ENCODE measurements at regions of chr16 and their contacts with region 1.

Region 1: DNA sequence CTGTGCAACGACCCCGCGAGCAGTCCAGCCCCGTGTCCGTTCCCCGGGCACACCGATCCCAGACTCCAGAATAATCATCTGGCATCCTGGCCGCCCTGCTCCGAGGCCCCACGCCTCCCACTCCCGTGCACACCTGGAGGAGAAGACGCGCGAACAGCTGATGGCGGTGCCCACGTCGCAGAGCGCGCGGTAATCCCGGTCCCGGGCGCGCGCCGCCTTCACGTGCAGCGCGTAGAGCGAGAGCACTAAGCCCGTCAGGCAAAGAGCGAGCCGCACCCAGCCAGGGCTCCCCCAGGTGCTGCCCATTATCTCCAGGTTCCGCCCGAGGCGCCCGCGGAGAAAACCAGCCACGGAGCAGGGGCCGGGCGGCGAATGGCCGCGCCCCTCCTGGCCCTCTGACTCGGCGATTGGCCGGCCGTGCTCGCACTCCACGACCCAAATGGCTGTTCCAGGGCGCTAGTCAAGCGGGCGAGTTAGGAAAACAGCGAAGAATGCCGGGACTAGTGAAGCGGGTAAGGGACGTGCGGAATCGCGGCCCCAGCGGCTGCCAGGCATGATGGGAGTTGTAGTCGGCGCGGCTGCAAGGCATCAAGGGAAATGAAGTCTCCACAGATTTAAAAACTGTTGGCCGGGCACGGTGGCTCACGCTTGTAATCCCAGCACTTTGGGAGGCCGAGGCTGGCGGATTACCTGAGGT is at the start of gene VKORC1:
- DNase-seq: peak; percentile 97
- H3K4me3 ChIP-seq: peak within 1 kb of the TSS; percentile 28 to 91 (median 62)
- H3K27ac ChIP-seq: peak within 1 kb of the TSS; percentile 6
- H3K4me1 ChIP-seq: peaks cover 3% of the 10 kb centered on the region
- H3K27me3 ChIP-seq: no peaks in the 10 kb centered on the region
- CTCF ChIP-seq: no peak
- POLR2A ChIP-seq: peak; percentile 64
- total RNA-seq, gene VKORC1: 91.8 and 93.5 TPM in 2 replicates

Region 2: DNA sequence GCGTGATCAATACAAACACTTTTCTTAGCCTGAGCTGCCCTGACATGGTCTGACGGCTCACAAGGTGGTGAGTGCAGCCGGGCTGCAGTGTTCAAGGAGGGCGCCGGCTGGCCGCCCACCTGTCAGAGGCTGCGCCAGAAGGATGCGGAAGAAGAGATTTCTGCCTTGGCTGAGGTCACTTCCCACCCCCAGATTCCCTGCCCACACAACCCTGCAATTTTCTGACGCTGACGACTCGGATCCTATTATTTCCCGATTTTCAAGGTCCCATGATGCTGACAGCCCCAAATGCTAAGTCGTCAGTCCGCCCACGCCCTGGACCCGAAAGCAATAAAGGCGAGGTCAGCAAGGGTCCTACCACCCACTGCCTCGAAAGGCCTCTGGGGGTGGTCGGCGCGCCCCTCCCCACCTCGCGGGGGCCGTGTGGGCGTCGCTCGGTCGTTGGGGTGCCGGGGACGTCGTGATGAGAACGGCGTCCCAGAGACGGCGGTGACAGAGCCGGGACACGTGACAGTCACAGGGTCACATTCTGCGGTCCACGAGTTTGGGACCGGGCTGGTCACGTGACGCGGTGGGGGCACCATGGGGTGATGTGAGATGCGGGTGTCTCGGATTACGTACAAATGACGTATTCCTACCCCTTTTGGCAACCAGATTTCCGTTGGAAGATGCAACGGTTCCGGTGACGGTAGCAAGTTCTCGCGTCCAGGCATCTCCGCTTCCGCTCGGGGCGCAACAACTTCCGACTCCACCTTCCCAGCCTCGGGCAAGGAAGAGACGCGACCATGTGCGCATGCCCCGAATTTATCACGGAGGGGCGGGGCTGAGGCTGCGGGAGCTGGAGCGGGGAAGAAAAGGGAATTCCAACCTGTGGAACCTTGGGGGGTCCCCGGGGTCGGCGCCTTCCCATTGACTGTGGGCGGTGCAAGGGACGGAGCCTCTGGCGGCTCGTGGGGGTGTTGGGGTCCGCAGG is 61.5 kb before region 1 on chr16 and contains the start of gene STX4:
- CTCF ChIA-PET with region 1: no interaction called
- POLR2A ChIA-PET with region 1: no interaction called
- dilution Hi-C with region 1: no loop called
- intact Hi-C with region 1: loop called (anchors 2 kb)
- DNase-seq: peak; percentile 94
- H3K4me3 ChIP-seq: peak within 1 kb of the TSS; percentile 63 to 75 (median 71)
- H3K27ac ChIP-seq: peak within 1 kb of the TSS; percentile 85
- H3K4me1 ChIP-seq: peaks cover 11% of the 10 kb centered on the region
- H3K27me3 ChIP-seq: no peaks in the 10 kb centered on the region
- CTCF ChIP-seq: no peak
- POLR2A ChIP-seq: no peak
- total RNA-seq, gene STX4: 60.7 and 65.2 TPM in 2 replicates

Region 3: GRCh38 chr16:31108035-31108793 is 13.6 kb after region 1 on chr16 and contains the start of gene BCKDK:
- CTCF ChIA-PET with region 1: no interaction called
- POLR2A ChIA-PET with region 1: no interaction called
- dilution Hi-C with region 1: no loop called
- intact Hi-C with region 1: loop called (anchors 2 kb)
- DNase-seq: peak; percentile 65
- H3K4me3 ChIP-seq: peak within 1 kb of the TSS; percentile 63 to 98 (median 66)
- H3K27ac ChIP-seq: peak within 1 kb of the TSS; percentile 53
- H3K4me1 ChIP-seq: peaks cover 12% of the 10 kb centered on the region
- H3K27me3 ChIP-seq: no peaks in the 10 kb centered on the region
- CTCF ChIP-seq: no peak
- POLR2A ChIP-seq: peak; percentile 72
- total RNA-seq, gene BCKDK: 56.5 and 57.8 TPM in 2 replicates

Region 4: DNA sequence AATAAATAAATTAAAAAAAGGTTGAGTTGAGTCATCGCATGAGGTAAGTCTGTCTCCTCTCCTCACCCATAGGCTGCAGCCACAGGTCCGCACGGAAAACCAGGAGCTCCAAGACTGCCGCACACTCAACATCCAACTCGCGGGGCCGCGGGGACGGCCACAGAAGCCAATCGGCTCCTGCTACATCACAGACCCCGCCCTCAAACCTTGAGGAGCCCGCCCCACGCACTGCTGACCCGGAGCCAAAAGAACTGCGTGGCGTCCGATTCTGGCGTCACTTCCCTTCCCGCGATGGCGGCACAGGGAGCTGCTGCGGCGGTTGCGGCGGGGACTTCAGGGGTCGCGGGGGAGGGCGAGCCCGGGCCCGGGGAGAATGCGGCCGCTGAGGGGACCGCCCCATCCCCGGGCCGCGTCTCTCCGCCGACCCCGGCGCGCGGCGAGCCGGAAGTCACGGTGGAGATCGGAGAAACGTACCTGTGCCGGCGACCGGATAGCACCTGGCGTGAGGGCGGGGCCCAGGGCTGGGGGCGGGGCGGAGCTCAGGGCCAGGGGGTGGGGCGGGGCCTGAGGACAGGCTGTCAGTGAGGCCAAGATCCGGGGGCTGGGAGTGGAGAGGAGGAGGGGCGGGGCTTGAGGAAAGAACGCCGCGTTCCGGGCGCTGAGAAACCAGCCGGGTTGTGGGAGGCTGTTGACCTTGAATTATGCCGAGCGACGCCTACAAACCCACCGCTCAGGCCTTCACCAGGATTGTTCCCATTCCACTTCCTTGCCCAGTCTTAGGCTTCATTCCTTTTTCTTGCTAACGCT is 23.0 kb after region 1 on chr16 and contains the start of gene KAT8:
- CTCF ChIA-PET with region 1: interaction called, 5 read pairs
- POLR2A ChIA-PET with region 1: no interaction called
- dilution Hi-C with region 1: no loop called
- intact Hi-C with region 1: loop called (anchors 1 kb)
- DNase-seq: peak; percentile 98
- H3K4me3 ChIP-seq: peak within 1 kb of the TSS; percentile 54 to 79 (median 79)
- H3K27ac ChIP-seq: peak within 1 kb of the TSS; percentile 77
- H3K4me1 ChIP-seq: peaks cover 7% of the 10 kb centered on the region
- H3K27me3 ChIP-seq: no peaks in the 10 kb centered on the region
- CTCF ChIP-seq: no peak
- POLR2A ChIP-seq: peak; percentile 84
- total RNA-seq, gene KAT8: 42.1 and 42.8 TPM in 2 replicates